WTC11 (cell line): ENCODE measurements at regions of chr6 and their contacts with region 1.

Region 1: GRCh38 chr6:35240840-35241801 is 18.4 kb upstream of the ZNF76 start:
- DNase-seq: peak; percentile 95
- ATAC-seq: peak; percentile 70
- H3K4me3 Mint-ChIP-seq: no peak overlapping the region
- H3K27ac Mint-ChIP-seq: no peak overlapping the region
- H3K4me1 Mint-ChIP-seq: peaks cover 52% of the 10 kb centered on the region
- H3K27me3 Mint-ChIP-seq: peaks cover 48% of the 10 kb centered on the region
- CTCF ChIP-seq: peak; percentile 98

Region 2: DNA sequence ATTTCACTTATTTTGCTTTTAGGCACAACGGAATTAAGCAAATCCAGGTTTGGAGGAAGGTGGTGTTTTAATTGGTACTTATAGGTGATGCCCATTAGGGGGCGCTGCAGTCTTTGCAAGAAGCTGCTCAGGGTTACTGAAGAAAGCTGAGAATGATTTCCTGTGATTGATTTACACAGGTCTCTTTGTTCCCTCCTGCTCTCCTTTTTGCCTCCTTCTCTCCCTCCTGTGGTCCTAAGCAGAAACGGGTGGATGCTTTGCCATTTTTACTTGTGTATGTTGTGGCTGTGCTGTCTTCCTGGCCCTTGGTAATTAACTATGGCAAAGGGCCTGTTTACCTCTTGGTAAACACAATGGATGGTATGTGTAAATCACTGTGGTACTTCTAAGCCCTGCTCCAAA is 254.3 kb before region 1 on chr6:
- CTCF ChIA-PET with region 1: interaction called, 24 read pairs
- POLR2A ChIA-PET with region 1: no interaction called
- DNase-seq: peak; percentile 67
- ATAC-seq: peak; percentile 97
- H3K4me3 Mint-ChIP-seq: no peak overlapping the region
- H3K27ac Mint-ChIP-seq: peak overlapping the region; percentile 83
- H3K4me1 Mint-ChIP-seq: peaks cover 8% of the 10 kb centered on the region
- H3K27me3 Mint-ChIP-seq: no peaks in the 10 kb centered on the region
- CTCF ChIP-seq: peak; percentile 91

Region 3: DNA sequence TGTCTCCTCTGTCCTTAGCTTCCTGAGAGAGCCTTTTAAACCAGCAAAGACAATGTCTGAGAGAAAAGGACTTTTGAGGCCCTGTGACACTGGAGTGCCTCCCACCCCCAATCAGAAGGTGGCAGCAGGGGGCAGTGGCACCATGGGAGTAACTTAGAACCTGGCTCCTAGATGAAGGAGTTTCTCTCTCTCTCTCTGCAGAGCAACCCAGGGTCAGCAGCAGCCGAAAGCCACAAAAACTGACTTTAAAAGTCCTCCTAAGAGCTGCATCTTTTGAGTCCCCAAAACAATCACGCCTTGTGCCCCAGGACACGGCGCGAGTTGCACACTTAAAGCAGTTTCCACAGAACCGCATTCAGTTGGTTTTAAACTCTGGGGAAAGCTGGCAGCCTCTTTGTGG is 94.7 kb before region 1 on chr6:
- CTCF ChIA-PET with region 1: interaction called, 102 read pairs
- POLR2A ChIA-PET with region 1: interaction called, 3 read pairs
- DNase-seq: peak; percentile 56
- ATAC-seq: peak; percentile 15; the same call in 1 of the 2 replicates
- H3K4me3 Mint-ChIP-seq: no peak overlapping the region
- H3K27ac Mint-ChIP-seq: no peak overlapping the region
- H3K4me1 Mint-ChIP-seq: peaks cover 30% of the 10 kb centered on the region
- H3K27me3 Mint-ChIP-seq: peaks cover 60% of the 10 kb centered on the region
- CTCF ChIP-seq: no peak

Region 4: GRCh38 chr6:35181933-35182612 is 59.0 kb before region 1 on chr6:
- CTCF ChIA-PET with region 1: interaction called, 11 read pairs
- POLR2A ChIA-PET with region 1: interaction called, 4 read pairs
- DNase-seq: peak; percentile 49
- ATAC-seq: peak; percentile 41
- H3K4me3 Mint-ChIP-seq: no peak overlapping the region
- H3K27ac Mint-ChIP-seq: no peak overlapping the region
- H3K4me1 Mint-ChIP-seq: peaks cover 7% of the 10 kb centered on the region; the same call in 1 of the 2 replicates
- H3K27me3 Mint-ChIP-seq: peaks cover 11% of the 10 kb centered on the region
- CTCF ChIP-seq: no peak

Region 5: DNA sequence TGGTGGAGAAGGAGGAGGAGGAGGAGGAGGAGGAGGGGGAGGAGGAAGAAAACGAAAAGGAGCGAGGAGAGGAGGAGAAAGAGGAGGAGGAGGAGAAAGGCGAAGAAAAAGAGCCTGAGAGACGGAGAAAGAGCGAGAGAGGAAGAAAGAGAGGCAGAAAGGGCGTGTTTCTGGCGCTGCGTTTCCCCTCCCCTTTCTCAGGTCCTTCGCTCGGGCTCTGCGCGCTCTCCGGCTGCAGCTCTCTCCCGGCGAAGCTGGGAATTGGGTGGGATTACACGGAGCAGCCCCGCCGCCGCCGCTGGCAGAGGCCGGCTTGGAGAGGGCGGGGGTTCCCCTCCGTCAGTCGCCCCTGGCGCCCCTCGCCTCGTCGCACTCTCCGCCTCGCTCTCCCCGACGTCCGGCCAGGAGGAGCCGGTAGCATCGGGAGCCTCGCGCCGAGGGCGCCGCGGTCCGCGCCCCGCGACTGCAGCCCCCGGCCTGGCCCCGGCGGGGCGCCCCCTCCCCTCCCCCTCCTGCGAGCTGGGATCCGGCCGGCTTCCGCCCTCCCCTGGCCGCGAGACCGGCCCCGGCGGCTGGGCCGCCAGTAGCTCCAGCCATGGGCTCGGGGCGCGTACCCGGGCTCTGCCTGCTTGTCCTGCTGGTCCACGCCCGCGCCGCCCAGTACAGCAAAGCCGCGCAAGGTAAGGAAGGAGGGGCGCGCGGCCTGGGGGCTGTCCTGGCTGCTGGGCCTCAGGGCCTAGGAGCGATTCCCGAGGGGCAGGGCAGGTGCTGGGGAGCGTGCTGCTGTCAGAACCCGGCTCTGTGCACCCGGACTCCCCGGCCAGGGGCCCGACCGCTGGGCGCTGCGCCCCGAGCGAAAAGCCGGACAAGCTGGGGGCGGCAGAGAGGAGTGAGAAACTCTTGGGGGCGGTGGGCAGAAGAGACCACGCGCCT is 27.0 kb before region 1 on chr6 and contains the start of gene SCUBE3:
- CTCF ChIA-PET with region 1: interaction called, 54 read pairs
- POLR2A ChIA-PET with region 1: interaction called, 3 read pairs
- DNase-seq: peak; percentile 70
- ATAC-seq: peak; percentile 74
- H3K4me3 Mint-ChIP-seq: peak within 1 kb of the TSS; percentile 80
- H3K27ac Mint-ChIP-seq: no peak within 1 kb of the TSS
- H3K4me1 Mint-ChIP-seq: peaks cover 43% of the 10 kb centered on the region
- H3K27me3 Mint-ChIP-seq: peaks cover 82% of the 10 kb centered on the region
- CTCF ChIP-seq: no peak
- total RNA-seq, gene SCUBE3: 1.6 to 2.1 TPM (median 1.8 TPM) in 3 replicates

Region 6: GRCh38 chr6:35230950-35231349 is 10.2 kb before region 1 on chr6:
- CTCF ChIA-PET with region 1: interaction called, 40 read pairs
- POLR2A ChIA-PET with region 1: interaction called, 3 read pairs
- DNase-seq: no peak
- ATAC-seq: no peak
- H3K4me3 Mint-ChIP-seq: no peak overlapping the region
- H3K27ac Mint-ChIP-seq: no peak overlapping the region
- H3K4me1 Mint-ChIP-seq: peaks cover under 1% of the 10 kb centered on the region
- H3K27me3 Mint-ChIP-seq: peaks cover 40% of the 10 kb centered on the region
- CTCF ChIP-seq: no peak

Region 7: GRCh38 chr6:35267461-35267860 is 26.3 kb after region 1 on chr6:
- CTCF ChIA-PET with region 1: no interaction called
- POLR2A ChIA-PET with region 1: no interaction called
- DNase-seq: no peak
- ATAC-seq: no peak
- H3K4me3 Mint-ChIP-seq: no peak overlapping the region
- H3K27ac Mint-ChIP-seq: no peak overlapping the region; the same call in 1 of the 2 replicates
- H3K4me1 Mint-ChIP-seq: peaks cover 4% of the 10 kb centered on the region
- H3K27me3 Mint-ChIP-seq: peaks cover 2% of the 10 kb centered on the region; the same call in 1 of the 2 replicates
- CTCF ChIP-seq: no peak